Endothelial cell of umbilical vein (primary cell): ENCODE measurements at regions of chr6 and their contacts with region 1.

Region 1: GRCh38 chr6:30396833-30397479 is 52.0 kb downstream of the RPP21 start:
- DNase-seq: peak; percentile 72
- H3K4me3 ChIP-seq: no peak overlapping the region
- H3K27ac ChIP-seq: no peak overlapping the region
- H3K4me1 ChIP-seq: no peaks in the 10 kb centered on the region
- H3K27me3 ChIP-seq: peaks cover 21 to 25% of the 10 kb centered on the region in 2 experiments
- CTCF ChIP-seq: peak; percentile 92 to 98
- POLR2A ChIP-seq: no peak

Region 2: DNA sequence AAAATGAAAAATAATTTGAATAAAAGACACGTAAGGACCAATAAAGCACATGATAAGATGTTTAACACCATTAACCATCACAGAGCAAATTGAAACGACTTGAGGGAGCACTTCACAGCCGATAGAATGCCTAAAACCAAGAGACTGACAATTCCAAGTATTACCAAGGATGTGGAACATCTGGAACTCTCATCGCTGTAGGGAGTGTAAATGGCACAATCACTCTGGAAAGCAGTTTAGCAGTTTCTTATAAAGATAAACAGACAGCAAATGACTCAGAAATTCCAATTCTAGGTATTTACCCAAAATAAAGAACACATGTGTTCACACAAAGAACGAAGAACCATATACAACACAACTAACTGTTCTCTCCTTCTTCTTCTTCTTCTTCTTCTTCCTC is 829.0 kb before region 1 on chr6:
- CTCF ChIA-PET with region 1: no interaction called
- POLR2A ChIA-PET with region 1: no interaction called
- dilution Hi-C with region 1: no loop called
- intact Hi-C with region 1: no loop called
- DNase-seq: no peak
- H3K4me3 ChIP-seq: no peak overlapping the region
- H3K27ac ChIP-seq: no peak overlapping the region
- H3K4me1 ChIP-seq: no peaks in the 10 kb centered on the region
- H3K27me3 ChIP-seq: peaks cover 0 to 3% of the 10 kb centered on the region in 2 experiments
- CTCF ChIP-seq: no peak
- POLR2A ChIP-seq: no peak

Region 3: GRCh38 chr6:30238174-30238795 is 158.7 kb before region 1 on chr6:
- CTCF ChIA-PET with region 1: interaction called, 23 read pairs
- POLR2A ChIA-PET with region 1: no interaction called
- dilution Hi-C with region 1: no loop called
- intact Hi-C with region 1: loop called (anchors 5 kb)
- DNase-seq: no peak
- H3K4me3 ChIP-seq: no peak overlapping the region
- H3K27ac ChIP-seq: no peak overlapping the region
- H3K4me1 ChIP-seq: no peaks in the 10 kb centered on the region
- H3K27me3 ChIP-seq: peaks cover 7 to 17% of the 10 kb centered on the region in 2 experiments
- CTCF ChIP-seq: peak in 1 of 2 donors; percentile 34
- POLR2A ChIP-seq: no peak

Region 4: DNA sequence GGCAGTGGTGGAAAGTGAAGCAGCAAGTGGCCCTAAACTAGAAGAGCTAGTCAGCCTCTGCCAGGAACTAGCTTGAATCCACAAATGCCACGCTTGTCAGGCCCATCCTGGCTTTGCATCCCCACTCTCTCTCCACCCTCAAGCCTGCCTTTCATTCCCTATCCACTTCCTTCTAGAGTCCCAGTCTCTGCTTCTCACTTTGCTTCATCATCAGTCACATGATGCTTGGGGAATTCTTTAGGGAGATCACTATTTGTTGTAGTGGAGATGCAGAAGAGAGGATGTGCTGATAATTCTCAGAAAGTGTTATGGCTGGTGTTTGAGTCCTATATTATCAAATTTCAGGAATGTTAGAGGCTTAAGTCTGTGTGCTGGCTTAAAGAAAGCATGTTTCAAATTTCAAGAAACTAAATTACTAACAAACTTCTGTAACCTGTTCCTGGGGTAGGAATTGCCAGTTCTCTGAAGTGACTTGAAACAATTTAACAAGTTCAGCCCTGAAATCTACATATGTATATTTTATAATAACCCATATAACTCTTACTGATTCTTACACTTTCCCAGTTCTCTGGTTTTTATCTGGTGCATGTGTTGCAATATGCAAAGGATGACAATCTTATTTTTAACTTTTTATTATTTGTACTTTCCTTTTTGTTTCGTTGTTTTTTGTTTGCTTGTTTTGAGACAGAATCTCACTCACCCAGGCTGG is 62.7 kb before region 1 on chr6:
- CTCF ChIA-PET with region 1: no interaction called
- POLR2A ChIA-PET with region 1: no interaction called
- dilution Hi-C with region 1: no loop called
- intact Hi-C with region 1: no loop called
- DNase-seq: no peak
- H3K4me3 ChIP-seq: no peak overlapping the region
- H3K27ac ChIP-seq: no peak overlapping the region
- H3K4me1 ChIP-seq: no peaks in the 10 kb centered on the region
- H3K27me3 ChIP-seq: no peaks in the 10 kb centered on the region
- CTCF ChIP-seq: no peak
- POLR2A ChIP-seq: no peak

Region 5: GRCh38 chr6:30357678-30358540 is 39.0 kb before region 1 on chr6:
- CTCF ChIA-PET with region 1: interaction called, 48 read pairs
- POLR2A ChIA-PET with region 1: no interaction called
- dilution Hi-C with region 1: no loop called
- intact Hi-C with region 1: loop called (anchors 1 kb)
- DNase-seq: peak; percentile 71
- H3K4me3 ChIP-seq: peak overlapping the region; percentile 34 to 54 (median 43)
- H3K27ac ChIP-seq: no peak overlapping the region
- H3K4me1 ChIP-seq: peaks cover 5% of the 10 kb centered on the region
- H3K27me3 ChIP-seq: peaks cover 31 to 57% of the 10 kb centered on the region in 2 experiments
- CTCF ChIP-seq: peak; percentile 79 to 83
- POLR2A ChIP-seq: no peak

Region 6: DNA sequence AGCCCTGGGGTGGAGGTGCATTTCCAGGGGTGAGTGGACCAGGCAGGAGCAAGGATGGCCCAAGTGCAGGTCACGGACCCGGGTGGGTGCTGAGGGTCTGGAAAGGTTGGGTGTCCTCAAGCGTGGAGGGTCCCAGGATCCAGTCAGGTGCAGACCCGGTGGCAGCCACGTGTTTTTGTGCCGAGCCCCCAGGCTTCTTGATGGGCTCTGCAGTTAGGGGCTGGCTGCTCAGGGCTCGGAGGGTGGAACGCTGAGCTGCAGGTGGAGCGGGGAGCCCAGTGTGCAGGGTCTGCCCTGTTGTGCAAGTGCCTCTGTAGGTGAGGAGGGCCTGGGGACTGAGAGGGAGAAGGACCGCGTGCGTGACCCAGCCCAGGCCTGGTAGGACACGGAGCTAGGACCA is 21.5 kb after region 1 on chr6:
- CTCF ChIA-PET with region 1: interaction called, 5 read pairs
- POLR2A ChIA-PET with region 1: no interaction called
- dilution Hi-C with region 1: no loop called
- intact Hi-C with region 1: loop called (anchors 1 kb)
- DNase-seq: no peak
- H3K4me3 ChIP-seq: no peak overlapping the region
- H3K27ac ChIP-seq: no peak overlapping the region
- H3K4me1 ChIP-seq: no peaks in the 10 kb centered on the region
- H3K27me3 ChIP-seq: peaks cover 17 to 25% of the 10 kb centered on the region in 2 experiments
- CTCF ChIP-seq: no peak
- POLR2A ChIP-seq: no peak

Region 7: DNA sequence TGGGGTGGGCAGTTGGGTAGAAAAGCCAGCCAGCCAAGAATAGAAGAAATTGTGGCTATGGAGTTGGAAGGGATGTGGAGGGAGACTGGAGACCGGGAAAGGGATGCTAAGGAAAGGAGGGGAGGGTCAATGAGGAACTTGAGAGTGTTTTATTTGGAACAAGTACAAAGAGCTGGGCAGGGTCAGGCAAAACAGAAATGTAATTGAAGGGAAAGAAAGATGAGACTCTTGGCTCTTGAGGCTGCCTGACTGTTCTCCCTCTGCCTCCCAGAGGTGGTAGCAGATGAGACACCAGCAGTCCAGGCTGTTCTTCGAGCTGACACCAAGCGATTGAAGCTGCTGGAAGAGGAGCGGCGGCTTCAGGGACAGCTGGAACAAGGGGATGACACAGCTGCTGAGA is 187.0 kb after region 1 on chr6:
- CTCF ChIA-PET with region 1: no interaction called
- POLR2A ChIA-PET with region 1: no interaction called
- dilution Hi-C with region 1: no loop called
- intact Hi-C with region 1: no loop called
- DNase-seq: no peak
- H3K4me3 ChIP-seq: no peak overlapping the region
- H3K27ac ChIP-seq: no peak overlapping the region
- H3K4me1 ChIP-seq: no peaks in the 10 kb centered on the region
- H3K27me3 ChIP-seq: no peaks in the 10 kb centered on the region
- CTCF ChIP-seq: no peak
- POLR2A ChIP-seq: no peak

Region 8: DNA sequence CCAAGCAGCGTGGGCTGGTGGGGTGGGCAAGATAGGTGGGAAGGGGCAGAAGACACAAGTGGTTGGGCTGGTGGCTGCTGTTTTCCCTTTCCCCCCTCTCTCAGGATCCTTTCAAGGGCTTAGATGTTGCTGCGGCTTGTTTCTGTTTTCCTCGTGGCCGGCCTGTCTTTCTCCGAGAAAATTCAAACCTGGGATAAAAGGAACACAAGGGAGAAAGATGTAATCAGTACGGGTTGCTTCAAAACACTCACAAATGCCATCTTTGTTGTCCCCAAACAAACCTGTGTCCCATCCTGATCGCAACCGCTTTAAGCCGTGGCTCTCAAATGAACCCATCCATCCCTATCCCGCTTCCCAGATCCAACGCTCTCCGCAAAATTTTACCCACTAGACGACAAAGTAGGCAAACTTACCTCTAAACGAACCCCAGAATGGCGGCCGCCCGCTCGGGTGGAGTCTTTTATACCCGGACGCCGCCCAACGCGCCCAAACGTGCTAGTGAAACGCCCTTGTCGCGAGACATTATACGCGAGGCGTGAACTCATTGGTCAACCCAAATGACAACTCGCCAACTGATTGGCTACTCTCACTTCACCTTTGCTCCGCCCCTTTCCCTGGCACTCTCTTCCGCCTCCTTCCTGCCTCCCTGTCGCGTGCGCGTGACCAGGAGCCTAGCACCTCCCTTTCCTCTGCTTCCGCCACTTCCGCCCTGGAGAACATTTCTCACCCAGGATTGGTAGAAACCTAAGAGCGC is 220.0 kb after region 1 on chr6 and contains the start of gene PPP1R10:
- CTCF ChIA-PET with region 1: no interaction called
- POLR2A ChIA-PET with region 1: no interaction called
- dilution Hi-C with region 1: no loop called
- intact Hi-C with region 1: no loop called
- DNase-seq: peak; percentile 100
- H3K4me3 ChIP-seq: peak within 1 kb of the TSS; percentile 51 to 84 (median 73)
- H3K27ac ChIP-seq: peak within 1 kb of the TSS; percentile 96
- H3K4me1 ChIP-seq: peaks cover 21% of the 10 kb centered on the region
- H3K27me3 ChIP-seq: no peaks in the 10 kb centered on the region
- CTCF ChIP-seq: no peak
- POLR2A ChIP-seq: peak; percentile 100
- total RNA-seq, gene PPP1R10: 75.1 and 88.3 TPM in 2 replicates